A673 (cell line): ENCODE measurements at regions of chr1 and their contacts with region 1.

Region 1: DNA sequence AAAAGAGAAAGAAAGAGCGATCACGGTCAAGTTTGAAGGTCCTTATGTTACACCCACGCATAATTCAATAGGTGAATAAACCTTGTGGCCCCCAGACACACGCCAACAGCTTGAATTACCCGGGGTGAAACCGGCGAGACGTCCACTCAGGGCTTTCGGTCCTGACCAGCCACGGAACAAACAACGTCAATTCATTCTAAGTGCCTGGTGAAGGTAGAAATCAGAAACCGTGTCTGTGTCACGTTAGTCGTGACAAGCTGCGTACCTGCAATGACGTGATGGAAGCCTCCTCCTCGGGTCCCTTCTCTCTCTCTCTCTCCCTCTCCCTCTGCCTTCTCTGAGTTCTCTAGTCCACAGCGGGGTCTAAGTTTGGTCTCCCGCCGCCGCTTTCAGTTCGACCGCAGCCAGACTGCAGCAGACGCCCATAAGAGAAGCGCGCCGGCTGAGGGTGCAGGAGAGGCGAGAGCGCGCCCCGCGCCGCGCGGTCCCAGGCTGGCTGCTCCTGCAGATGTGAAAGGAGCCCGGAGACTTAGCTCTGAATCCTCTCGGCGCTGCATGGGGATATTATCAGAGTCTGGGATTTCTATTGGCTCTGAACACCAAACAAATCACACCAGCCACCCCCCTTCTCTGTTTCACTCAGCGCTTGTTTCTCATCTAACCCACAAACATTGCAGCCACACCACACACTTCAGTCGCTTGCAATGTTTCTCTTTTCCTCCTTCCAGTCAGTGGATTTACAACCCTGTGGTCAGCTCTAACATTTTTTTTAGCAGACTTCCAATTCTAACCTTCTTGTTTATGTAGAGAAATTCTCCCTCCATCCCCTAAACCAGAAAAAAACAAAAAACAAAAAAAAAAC is at the start of gene GREM2:
- DNase-seq: peak; percentile 10
- H3K4me3 ChIP-seq: peak within 1 kb of the TSS; percentile 25
- H3K27ac ChIP-seq: no peak within 1 kb of the TSS
- H3K4me1 ChIP-seq: no peaks in the 10 kb centered on the region
- H3K27me3 ChIP-seq: peaks cover 66% of the 10 kb centered on the region
- CTCF ChIP-seq: no peak
- total RNA-seq, gene GREM2: not detected in 2 replicates

Region 2: GRCh38 chr1:240455228-240455821 is 156.5 kb before region 1 on chr1:
- CTCF ChIA-PET with region 1: no interaction called
- POLR2A ChIA-PET with region 1: no interaction called
- intact Hi-C with region 1: loop called (anchors 2 kb)
- DNase-seq: peak; percentile 8
- H3K4me3 ChIP-seq: no peak overlapping the region
- H3K27ac ChIP-seq: no peak overlapping the region
- H3K4me1 ChIP-seq: no peaks in the 10 kb centered on the region
- H3K27me3 ChIP-seq: no peaks in the 10 kb centered on the region
- CTCF ChIP-seq: peak; percentile 46

Region 3: DNA sequence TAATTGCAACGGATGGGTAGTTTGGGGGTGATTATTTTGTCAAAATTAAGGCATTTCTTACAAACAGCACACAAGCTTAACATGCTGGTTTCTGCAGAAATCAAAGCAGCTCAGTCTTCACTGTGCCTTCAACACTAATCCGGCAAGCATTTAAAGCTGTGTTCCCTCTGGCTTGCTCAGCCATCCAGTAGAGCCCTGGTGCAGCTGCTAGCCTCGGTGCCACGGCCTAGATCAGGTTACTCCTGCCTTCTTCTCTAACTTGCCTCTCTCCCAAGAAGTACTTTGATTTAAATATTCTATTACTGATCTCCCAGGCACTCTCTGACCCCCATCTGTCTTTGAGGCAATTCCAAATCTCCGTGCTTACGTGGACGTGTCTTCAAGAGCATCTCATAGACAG is 85.5 kb before region 1 on chr1:
- CTCF ChIA-PET with region 1: no interaction called
- POLR2A ChIA-PET with region 1: interaction called, 10 read pairs
- intact Hi-C with region 1: no loop called
- DNase-seq: no peak
- H3K4me3 ChIP-seq: no peak overlapping the region
- H3K27ac ChIP-seq: no peak overlapping the region
- H3K4me1 ChIP-seq: no peaks in the 10 kb centered on the region
- H3K27me3 ChIP-seq: peaks cover 29% of the 10 kb centered on the region
- CTCF ChIP-seq: no peak

Region 4: DNA sequence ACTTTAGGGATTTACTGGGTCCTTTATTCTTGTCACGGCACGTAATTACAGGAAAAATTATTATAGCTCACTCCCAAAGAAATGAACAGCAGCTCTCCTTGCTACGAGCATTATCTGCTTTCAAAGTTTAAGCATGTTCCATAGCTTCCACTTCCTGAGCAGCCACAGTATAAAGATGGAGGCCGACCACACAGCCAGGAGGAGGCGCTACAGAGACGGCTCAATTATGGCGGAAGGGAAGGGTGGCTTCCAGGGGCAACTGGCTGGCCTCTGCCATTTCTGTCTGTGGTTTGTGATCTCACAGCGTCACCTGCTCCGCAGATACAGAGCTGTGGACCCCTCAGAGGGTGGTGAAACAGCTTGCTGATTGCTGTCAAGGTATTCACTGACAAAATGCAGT is 212.4 kb after region 1 on chr1:
- CTCF ChIA-PET with region 1: no interaction called
- POLR2A ChIA-PET with region 1: no interaction called
- intact Hi-C with region 1: no loop called
- DNase-seq: no peak
- H3K4me3 ChIP-seq: no peak overlapping the region
- H3K27ac ChIP-seq: no peak overlapping the region
- H3K4me1 ChIP-seq: no peaks in the 10 kb centered on the region
- H3K27me3 ChIP-seq: no peaks in the 10 kb centered on the region
- CTCF ChIP-seq: no peak